CD8-positive, alpha-beta T cell (primary cell): ENCODE measurements at regions of chr1 and their contacts with region 1.

Region 1: DNA sequence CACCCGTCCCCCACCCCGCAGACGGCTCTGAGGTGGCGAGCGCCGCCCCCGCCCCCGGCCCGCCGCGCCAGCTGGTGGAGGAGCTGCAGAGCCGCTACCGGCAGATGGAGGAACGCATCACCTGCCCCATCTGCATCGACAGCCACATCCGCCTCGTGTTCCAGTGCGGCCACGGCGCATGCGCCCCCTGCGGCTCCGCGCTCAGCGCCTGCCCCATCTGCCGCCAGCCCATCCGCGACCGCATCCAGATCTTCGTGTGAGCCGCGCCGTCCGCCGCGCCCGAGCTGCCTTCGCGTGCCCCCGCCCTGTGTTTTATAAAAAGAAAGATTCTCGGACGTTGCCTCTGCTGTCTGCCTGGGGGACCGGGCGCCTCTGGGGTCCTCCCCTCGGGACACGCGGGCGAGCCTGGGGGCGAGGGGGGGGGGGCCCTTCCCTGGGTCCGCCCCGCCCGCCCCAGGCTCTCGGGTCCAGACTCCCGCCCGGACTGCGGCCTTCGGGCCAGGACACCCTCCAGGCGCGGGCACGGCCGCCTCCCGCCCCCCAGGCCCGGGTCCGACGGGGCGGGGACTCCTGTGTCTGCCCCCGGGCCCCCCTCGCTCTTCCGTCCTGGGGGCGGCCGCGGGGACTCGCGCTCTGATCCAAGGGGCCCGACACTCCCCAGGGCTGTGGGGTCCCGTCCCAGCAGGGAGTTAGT is 1.6 kb upstream of the MMP23B start:
- DNase-seq: peak; percentile 89 to 99 (median 93)
- ATAC-seq: peak; percentile 56
- H3K4me3 ChIP-seq: peak overlapping the region; percentile 45 to 53
- H3K4me3 Mint-ChIP-seq: peak overlapping the region; percentile 92
- H3K27ac ChIP-seq: peak overlapping the region; percentile 55 to 79
- H3K27ac Mint-ChIP-seq: peak overlapping the region; percentile 96
- H3K4me1 ChIP-seq: peaks cover 11% of the 10 kb centered on the region
- H3K4me1 Mint-ChIP-seq: peaks cover 10% of the 10 kb centered on the region
- H3K27me3 ChIP-seq: no peaks in the 10 kb centered on the region
- H3K27me3 Mint-ChIP-seq: no peaks in the 10 kb centered on the region
- CTCF ChIP-seq: no peak

Region 2: GRCh38 chr1:1471389-1472052 is 158.9 kb before region 1 on chr1 and contains the start of gene ATAD3B:
- CTCF ChIA-PET with region 1: no interaction called
- POLR2A ChIA-PET with region 1: no interaction called
- intact Hi-C with region 1: loop called in 1 of 2 experiments (anchors 2 kb)
- DNase-seq: peak; percentile 75 to 95 (median 90)
- ATAC-seq: peak; percentile 93
- H3K4me3 ChIP-seq: peak within 1 kb of the TSS; percentile 62 to 86
- H3K4me3 Mint-ChIP-seq: peak within 1 kb of the TSS; percentile 92
- H3K27ac ChIP-seq: peak within 1 kb of the TSS; percentile 81 to 89
- H3K27ac Mint-ChIP-seq: peak within 1 kb of the TSS; percentile 94
- H3K4me1 ChIP-seq: peaks cover 24% of the 10 kb centered on the region
- H3K4me1 Mint-ChIP-seq: peaks cover 24% of the 10 kb centered on the region
- H3K27me3 ChIP-seq: no peaks in the 10 kb centered on the region
- H3K27me3 Mint-ChIP-seq: no peaks in the 10 kb centered on the region
- CTCF ChIP-seq: no peak
- total RNA-seq, gene ATAD3B: 55.4 to 69.6 TPM

Region 3: DNA sequence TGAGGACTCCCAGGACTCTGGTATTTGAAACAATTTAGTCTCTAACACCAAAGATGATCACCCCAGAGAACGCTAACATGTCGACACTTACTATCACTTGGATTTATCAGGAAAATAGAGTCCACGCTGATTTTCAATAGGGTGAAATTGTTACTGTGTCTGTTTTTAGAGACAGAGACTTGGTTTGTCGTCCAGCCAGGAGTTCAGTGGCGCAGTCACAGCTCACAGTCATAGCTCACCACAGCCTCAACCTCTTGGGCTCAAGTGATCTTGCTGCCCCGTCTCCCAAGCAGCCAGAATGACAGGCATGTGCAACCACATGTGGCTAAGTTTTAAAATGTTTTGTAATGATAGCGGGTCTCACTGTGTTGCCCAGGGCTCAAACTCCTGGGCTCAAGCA is 61.1 kb before region 1 on chr1:
- CTCF ChIA-PET with region 1: no interaction called
- POLR2A ChIA-PET with region 1: interaction called, 11 read pairs
- intact Hi-C with region 1: loop called (anchors 2 kb)
- DNase-seq: no peak
- ATAC-seq: no peak
- H3K4me3 ChIP-seq: no peak overlapping the region
- H3K4me3 Mint-ChIP-seq: peak overlapping the region; percentile 6
- H3K27ac ChIP-seq: no peak overlapping the region
- H3K27ac Mint-ChIP-seq: peak overlapping the region; percentile 18
- H3K4me1 ChIP-seq: peaks cover 50% of the 10 kb centered on the region
- H3K4me1 Mint-ChIP-seq: peaks cover 57% of the 10 kb centered on the region
- H3K27me3 ChIP-seq: no peaks in the 10 kb centered on the region
- H3K27me3 Mint-ChIP-seq: no peaks in the 10 kb centered on the region
- CTCF ChIP-seq: no peak

Region 4: GRCh38 chr1:1678581-1679390 is 48.4 kb after region 1 on chr1:
- CTCF ChIA-PET with region 1: interaction called, 10 read pairs
- POLR2A ChIA-PET with region 1: interaction called, 7 read pairs
- intact Hi-C with region 1: loop called in 1 of 2 experiments (anchors 5 kb)
- DNase-seq: peak in 6 of 9 experiments; percentile 34 to 70 (median 54)
- ATAC-seq: peak; percentile 58
- H3K4me3 ChIP-seq: peak overlapping the region in 1 of 2 experiments; percentile 49
- H3K4me3 Mint-ChIP-seq: peak overlapping the region; percentile 87
- H3K27ac ChIP-seq: peak overlapping the region; percentile 53 to 85
- H3K27ac Mint-ChIP-seq: peak overlapping the region; percentile 97
- H3K4me1 ChIP-seq: peaks cover 15% of the 10 kb centered on the region
- H3K4me1 Mint-ChIP-seq: peaks cover 31% of the 10 kb centered on the region
- H3K27me3 ChIP-seq: no peaks in the 10 kb centered on the region
- H3K27me3 Mint-ChIP-seq: no peaks in the 10 kb centered on the region
- CTCF ChIP-seq: peak; percentile 57

Region 5: GRCh38 chr1:1703796-1704195 is 73.4 kb after region 1 on chr1:
- CTCF ChIA-PET with region 1: no interaction called
- POLR2A ChIA-PET with region 1: no interaction called
- intact Hi-C with region 1: loop called in 1 of 2 experiments (anchors 5 kb)
- DNase-seq: peak in 1 of 9 experiments; percentile 45
- ATAC-seq: no peak
- H3K4me3 ChIP-seq: no peak overlapping the region
- H3K4me3 Mint-ChIP-seq: no peak overlapping the region
- H3K27ac ChIP-seq: no peak overlapping the region
- H3K27ac Mint-ChIP-seq: no peak overlapping the region
- H3K4me1 ChIP-seq: no peaks in the 10 kb centered on the region
- H3K4me1 Mint-ChIP-seq: no peaks in the 10 kb centered on the region
- H3K27me3 ChIP-seq: no peaks in the 10 kb centered on the region
- H3K27me3 Mint-ChIP-seq: no peaks in the 10 kb centered on the region
- CTCF ChIP-seq: no peak

Region 6: DNA sequence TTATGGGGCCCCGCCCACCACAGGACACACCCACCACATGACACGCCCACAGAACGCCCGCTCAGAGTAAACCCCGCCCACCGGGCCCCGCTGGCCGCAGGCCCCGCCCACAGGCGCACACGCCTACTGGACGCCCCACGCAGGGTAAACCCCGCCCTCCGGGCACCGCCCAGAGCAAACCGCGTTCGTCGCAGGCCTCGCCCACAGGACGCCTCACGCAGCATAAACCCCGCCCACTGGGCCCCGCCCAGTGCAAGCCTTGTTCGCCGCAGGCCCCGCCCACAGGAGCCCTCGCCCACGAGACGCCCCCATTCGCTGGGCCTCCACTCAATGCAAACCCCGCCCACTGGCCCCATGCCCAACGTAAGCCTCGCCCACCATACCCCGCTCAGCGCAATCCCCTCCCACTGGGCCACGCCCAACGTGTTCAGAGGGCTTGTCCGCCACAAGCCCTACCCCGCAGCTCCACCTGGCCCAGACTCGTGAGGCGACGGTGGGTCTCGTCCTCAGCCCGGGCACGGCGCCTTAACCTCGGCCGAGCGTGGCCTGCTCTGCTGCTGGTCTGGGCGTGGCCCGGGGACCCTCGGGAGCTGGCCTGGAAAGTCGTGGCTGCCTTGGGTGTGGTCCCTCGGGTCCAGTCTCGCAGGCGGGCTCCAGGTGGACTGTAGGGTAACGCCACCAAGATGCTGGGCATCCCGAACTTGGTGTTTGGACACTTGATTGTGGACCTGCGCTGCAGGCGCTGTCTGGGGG is 289.1 kb after region 1 on chr1:
- CTCF ChIA-PET with region 1: no interaction called
- POLR2A ChIA-PET with region 1: no interaction called
- intact Hi-C with region 1: no loop called
- DNase-seq: peak; percentile 97 to 100 (median 99)
- ATAC-seq: peak; percentile 89
- H3K4me3 ChIP-seq: peak overlapping the region; percentile 39 to 74
- H3K4me3 Mint-ChIP-seq: peak overlapping the region; percentile 47
- H3K27ac ChIP-seq: peak overlapping the region in 1 of 2 experiments; percentile 28
- H3K27ac Mint-ChIP-seq: peak overlapping the region; percentile 5
- H3K4me1 ChIP-seq: peaks cover 17% of the 10 kb centered on the region
- H3K4me1 Mint-ChIP-seq: peaks cover 3% of the 10 kb centered on the region
- H3K27me3 ChIP-seq: no peaks in the 10 kb centered on the region
- H3K27me3 Mint-ChIP-seq: no peaks in the 10 kb centered on the region
- CTCF ChIP-seq: no peak

Region 7: GRCh38 chr1:1929639-1930471 is 299.4 kb after region 1 on chr1:
- CTCF ChIA-PET with region 1: no interaction called
- POLR2A ChIA-PET with region 1: no interaction called
- intact Hi-C with region 1: no loop called
- DNase-seq: no peak
- ATAC-seq: no peak
- H3K4me3 ChIP-seq: no peak overlapping the region
- H3K4me3 Mint-ChIP-seq: no peak overlapping the region
- H3K27ac ChIP-seq: no peak overlapping the region
- H3K27ac Mint-ChIP-seq: no peak overlapping the region
- H3K4me1 ChIP-seq: no peaks in the 10 kb centered on the region
- H3K4me1 Mint-ChIP-seq: no peaks in the 10 kb centered on the region
- H3K27me3 ChIP-seq: no peaks in the 10 kb centered on the region
- H3K27me3 Mint-ChIP-seq: no peaks in the 10 kb centered on the region
- CTCF ChIP-seq: no peak